Tibial artery (tissue), 4 donors: ENCODE measurements at regions of chr1 and their contacts with region 1.

Region 1: GRCh38 chr1:7667625-7668218 is 103.4 kb upstream of the VAMP3 start:
- DNase-seq: peak; percentile 92 to 95
- H3K4me3 ChIP-seq: no peak overlapping the region
- H3K27ac ChIP-seq: no peak overlapping the region
- H3K4me1 ChIP-seq: peaks cover 0 to 13% (median 8%) of the 10 kb centered on the region in 4 donors
- H3K27me3 ChIP-seq: peaks cover 0 to 24% of the 10 kb centered on the region in 2 donors
- CTCF ChIP-seq: peak; percentile 100

Region 2: GRCh38 chr1:7539769-7540175 is 128.0 kb before region 1 on chr1:
- intact Hi-C with region 1: no loop called
- DNase-seq: no peak
- H3K4me3 ChIP-seq: no peak overlapping the region
- H3K27ac ChIP-seq: no peak overlapping the region
- H3K4me1 ChIP-seq: no peaks in the 10 kb centered on the region
- H3K27me3 ChIP-seq: peaks cover 0 to 41% of the 10 kb centered on the region in 2 donors
- CTCF ChIP-seq: no peak

Region 3: GRCh38 chr1:7747605-7748004 is 79.9 kb after region 1 on chr1:
- intact Hi-C with region 1: loop called (anchors 1 kb)
- DNase-seq: no peak
- H3K4me3 ChIP-seq: no peak overlapping the region
- H3K27ac ChIP-seq: no peak overlapping the region
- H3K4me1 ChIP-seq: no peaks in the 10 kb centered on the region
- H3K27me3 ChIP-seq: no peaks in the 10 kb centered on the region
- CTCF ChIP-seq: no peak

Region 4: DNA sequence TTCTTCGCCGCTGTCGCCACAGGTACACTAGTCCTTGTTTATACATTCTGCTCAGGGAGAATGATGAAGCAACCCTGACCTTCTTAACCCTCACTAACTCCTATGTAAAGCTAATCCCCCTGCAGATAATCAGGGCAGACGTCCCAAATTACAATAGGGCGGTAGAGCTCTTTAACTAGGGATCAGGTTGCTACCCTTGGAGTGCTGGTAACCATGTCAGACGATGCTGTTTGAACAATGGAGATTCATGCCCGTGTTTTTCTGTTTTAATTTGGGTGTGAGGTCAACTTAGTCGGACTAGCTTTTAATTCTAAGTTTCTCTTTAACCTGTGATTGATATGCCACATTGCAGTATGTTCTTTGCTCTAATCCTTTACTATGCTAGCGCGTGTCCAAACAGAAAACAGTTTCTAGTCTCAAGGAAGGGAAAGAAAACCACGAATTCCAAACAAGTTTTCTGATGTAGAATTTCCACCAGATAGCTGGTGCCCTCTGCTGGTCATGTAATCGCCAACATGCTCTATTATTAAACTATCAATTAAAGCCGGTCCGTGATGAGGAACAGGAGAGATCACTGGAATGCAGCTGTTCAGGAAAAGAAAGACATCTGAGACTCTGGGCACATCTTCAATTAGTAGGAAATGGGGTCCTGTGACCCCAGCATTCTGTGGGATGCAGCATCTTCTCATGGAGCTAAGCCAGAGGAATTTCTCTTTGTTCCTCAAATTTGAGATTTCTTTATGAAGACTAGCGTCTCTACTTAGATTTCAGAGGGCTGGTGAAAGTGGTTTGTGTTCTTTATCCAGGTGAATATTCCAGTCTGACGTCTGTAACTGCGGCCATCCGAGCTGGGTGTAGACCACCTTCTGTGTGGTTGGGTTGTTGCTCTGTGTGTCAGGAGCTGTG is 85.0 kb after region 1 on chr1:
- intact Hi-C with region 1: loop called (anchors 1 kb)
- DNase-seq: peak in 1 of 2 donors; percentile 69
- H3K4me3 ChIP-seq: peak overlapping the region; percentile 17 to 45
- H3K27ac ChIP-seq: no peak overlapping the region
- H3K4me1 ChIP-seq: peaks cover 0 to 2% (median 0%) of the 10 kb centered on the region in 4 donors
- H3K27me3 ChIP-seq: no peaks in the 10 kb centered on the region
- CTCF ChIP-seq: peak; percentile 78 to 86

Region 5: GRCh38 chr1:7902478-7903085 is 234.9 kb after region 1 on chr1:
- intact Hi-C with region 1: loop called (anchors 10 kb)
- DNase-seq: peak; percentile 38 to 73
- H3K4me3 ChIP-seq: peak overlapping the region; percentile 3 to 45
- H3K27ac ChIP-seq: no peak overlapping the region
- H3K4me1 ChIP-seq: peaks cover 0 to 5% (median 2%) of the 10 kb centered on the region in 4 donors
- H3K27me3 ChIP-seq: no peaks in the 10 kb centered on the region
- CTCF ChIP-seq: peak; percentile 72 to 78

Region 6: DNA sequence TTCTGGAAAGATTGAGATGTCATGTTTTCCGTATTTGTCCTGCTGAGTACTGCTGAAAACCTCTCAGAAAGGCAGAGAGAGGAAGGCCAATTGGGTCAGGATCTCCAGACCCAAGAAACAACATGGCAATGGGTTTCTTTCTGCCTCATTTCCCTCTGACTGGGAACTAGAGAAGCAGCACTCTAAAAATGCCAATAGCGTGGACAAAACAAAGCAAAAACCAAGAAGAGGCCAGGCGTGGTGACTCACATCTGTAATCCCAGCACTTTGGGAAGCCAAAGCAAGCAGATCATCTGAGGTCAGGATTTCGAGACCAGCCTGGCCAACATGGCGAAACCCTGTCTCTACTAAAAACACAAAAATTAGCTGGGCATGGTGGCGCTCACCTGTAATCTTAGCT is 254.6 kb after region 1 on chr1:
- intact Hi-C with region 1: no loop called
- DNase-seq: no peak
- H3K4me3 ChIP-seq: peak overlapping the region in 1 of 2 donors; percentile 12
- H3K27ac ChIP-seq: peak overlapping the region; percentile 52 to 67
- H3K4me1 ChIP-seq: peaks cover 0 to 10% (median 0%) of the 10 kb centered on the region in 4 donors
- H3K27me3 ChIP-seq: peaks cover 0 to 10% of the 10 kb centered on the region in 2 donors
- CTCF ChIP-seq: no peak